ENCODE measurements at regions of chr7 and their contacts with region 1.

Region 1: DNA sequence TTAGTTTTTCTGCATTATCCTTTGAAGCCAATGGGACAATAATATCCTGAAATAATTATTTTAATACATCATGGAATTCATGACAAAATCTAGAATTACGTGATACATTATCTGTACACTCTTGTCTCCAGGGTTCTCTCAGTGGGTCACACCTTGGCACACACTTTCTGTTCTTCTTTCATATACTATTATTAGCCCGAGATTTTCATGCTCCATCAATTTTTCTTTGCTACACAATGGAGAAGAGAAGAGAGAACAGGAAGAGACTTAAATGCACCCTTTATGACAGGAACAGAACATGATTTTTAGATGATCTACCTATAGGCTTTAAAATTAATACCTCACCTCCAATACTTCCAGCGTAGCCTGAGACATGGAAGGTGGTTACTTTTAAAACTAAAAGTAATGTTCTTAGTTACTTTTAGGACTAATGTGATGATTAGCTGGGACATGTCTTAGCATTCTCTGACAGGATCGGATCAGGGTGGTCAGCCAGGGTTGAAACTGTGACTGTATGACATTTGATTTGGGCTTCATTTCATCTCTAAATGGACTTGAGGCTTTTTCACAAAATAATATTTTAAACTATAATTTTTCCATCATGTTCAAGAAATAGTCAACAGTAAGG is 148.2 kb upstream of the WNT16 start:
- DNase-seq: peak; percentile 90
- H3K4me3 ChIP-seq: peak overlapping the region; percentile 54
- H3K27ac ChIP-seq: peak overlapping the region; percentile 91
- H3K4me1 ChIP-seq: peaks cover 73% of the 10 kb centered on the region
- CTCF ChIP-seq: no peak

Region 2: GRCh38 chr7:120857588-120858573 is 322.7 kb before region 1 on chr7 and contains the start of gene TSPAN12:
- CTCF ChIA-PET with region 1: no interaction called
- POLR2A ChIA-PET with region 1: no interaction called
- intact Hi-C with region 1: no loop called
- DNase-seq: no peak
- H3K4me3 ChIP-seq: no peak within 1 kb of the TSS
- H3K27ac ChIP-seq: no peak within 1 kb of the TSS
- H3K4me1 ChIP-seq: no peaks in the 10 kb centered on the region
- CTCF ChIP-seq: no peak
- total RNA-seq, gene TSPAN12: not detected in 2 replicates

Region 3: GRCh38 chr7:120950539-120951308 is 229.8 kb before region 1 on chr7 and contains the start of gene ING3:
- CTCF ChIA-PET with region 1: no interaction called
- POLR2A ChIA-PET with region 1: interaction called, 8 read pairs
- intact Hi-C with region 1: loop called (anchors 5 kb)
- DNase-seq: peak; percentile 98
- H3K4me3 ChIP-seq: peak within 1 kb of the TSS; percentile 77
- H3K27ac ChIP-seq: peak within 1 kb of the TSS; percentile 80
- H3K4me1 ChIP-seq: peaks cover 14% of the 10 kb centered on the region
- CTCF ChIP-seq: no peak
- total RNA-seq, gene ING3: 12.5 and 21.4 TPM in 2 replicates

Region 4: DNA sequence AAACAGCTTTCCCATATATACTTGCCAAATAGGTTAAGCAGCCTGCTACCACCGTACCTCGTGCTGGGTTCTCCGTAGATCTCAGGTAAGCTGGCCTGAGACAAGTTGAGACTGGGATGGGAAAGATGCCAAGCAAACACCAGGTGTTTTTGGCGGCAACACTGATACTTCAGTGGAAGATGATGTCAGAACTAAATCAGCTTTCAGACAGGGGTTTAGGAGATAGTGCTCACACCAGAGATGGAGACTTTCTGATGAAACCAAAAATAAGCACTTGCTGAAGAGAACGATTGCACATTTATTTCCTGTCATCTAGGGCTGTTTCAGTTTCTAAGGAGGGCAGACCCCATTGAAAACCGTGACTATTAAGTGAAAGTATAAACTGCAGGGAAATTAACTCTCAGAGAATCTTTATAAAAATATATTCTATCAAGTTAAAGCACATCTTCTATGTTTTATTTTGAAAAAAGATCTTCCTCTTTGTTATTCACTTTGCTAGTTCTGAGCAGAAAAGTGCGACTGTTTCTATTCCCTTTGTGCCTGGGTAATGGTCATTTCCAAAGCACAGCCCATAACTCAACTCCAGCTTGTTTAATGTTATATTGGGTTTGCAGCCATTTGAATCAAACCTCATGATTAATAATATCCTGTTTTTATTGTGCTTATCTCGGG is 42.2 kb before region 1 on chr7:
- CTCF ChIA-PET with region 1: no interaction called
- POLR2A ChIA-PET with region 1: interaction called, 4 read pairs
- intact Hi-C with region 1: loop called (anchors 2 kb)
- DNase-seq: peak; percentile 76
- H3K4me3 ChIP-seq: peak overlapping the region; percentile 63
- H3K27ac ChIP-seq: peak overlapping the region; percentile 42
- H3K4me1 ChIP-seq: peaks cover 28% of the 10 kb centered on the region
- CTCF ChIP-seq: no peak

Region 5: DNA sequence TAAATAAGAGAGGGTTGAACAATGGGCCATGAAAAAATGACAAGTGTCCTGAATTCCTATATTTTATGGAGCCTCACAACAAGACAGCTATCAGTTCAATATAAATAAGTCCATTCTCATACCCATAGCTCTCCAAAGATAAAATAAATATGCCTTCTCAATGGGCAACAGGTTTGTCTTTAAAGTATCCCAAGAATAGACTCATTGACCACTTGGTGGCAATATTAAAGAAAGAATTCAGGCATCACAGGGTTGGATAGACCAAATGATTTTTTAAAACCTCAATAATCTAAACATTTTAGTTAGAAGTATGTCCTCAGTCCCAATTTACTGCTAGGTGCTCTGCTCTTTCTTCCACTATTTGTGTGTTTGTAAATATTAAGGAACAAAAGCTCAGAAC is 16.9 kb before region 1 on chr7:
- CTCF ChIA-PET with region 1: interaction called, 3 read pairs
- POLR2A ChIA-PET with region 1: interaction called, 14 read pairs
- intact Hi-C with region 1: no loop called
- DNase-seq: peak; percentile 18
- H3K4me3 ChIP-seq: no peak overlapping the region
- H3K27ac ChIP-seq: no peak overlapping the region
- H3K4me1 ChIP-seq: peaks cover 6% of the 10 kb centered on the region
- CTCF ChIP-seq: peak; percentile 69